ENCODE measurements at regions of chr2 and their contacts with region 1.

Region 1: GRCh38 chr2:164737612-164738081 is 104.0 kb downstream of the COBLL1 start:
- DNase-seq: peak; percentile 73 to 76
- H3K4me3 ChIP-seq: no peak overlapping the region
- H3K4me1 ChIP-seq: peaks cover 26% of the 10 kb centered on the region
- H3K27me3 ChIP-seq: no peaks in the 10 kb centered on the region

Region 2: DNA sequence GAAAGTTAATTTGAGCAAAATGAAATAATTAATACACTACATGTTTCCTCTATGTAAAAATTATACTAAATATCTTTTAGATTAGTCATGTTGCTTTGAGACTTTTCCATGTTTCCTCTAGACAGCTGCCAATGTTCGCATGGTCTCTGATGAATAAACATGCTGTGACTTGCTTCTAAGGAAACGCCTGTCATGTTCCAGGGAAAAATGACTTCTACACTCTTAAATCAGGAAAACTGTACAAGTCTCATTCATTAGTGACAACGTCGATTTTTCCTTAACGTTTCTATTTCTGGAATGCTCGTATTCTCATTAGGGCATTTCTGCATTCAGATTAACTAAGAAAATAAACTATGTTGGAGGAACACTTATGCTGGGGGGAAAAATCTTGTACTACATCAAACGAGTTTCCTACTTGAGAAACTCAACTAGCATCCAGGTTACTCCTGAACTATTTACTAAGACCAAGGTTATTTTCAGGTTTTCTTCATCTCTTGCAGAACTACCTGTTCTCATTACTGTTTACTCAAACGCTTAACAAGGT is 102.3 kb after region 1 on chr2:
- in situ Hi-C with region 1: loop called (anchors 10 kb)
- DNase-seq: no peak
- H3K4me3 ChIP-seq: peak overlapping the region; percentile 59
- H3K4me1 ChIP-seq: peaks cover 49% of the 10 kb centered on the region
- H3K27me3 ChIP-seq: no peaks in the 10 kb centered on the region

Region 3: GRCh38 chr2:164920430-164920829 is 182.8 kb after region 1 on chr2:
- in situ Hi-C with region 1: loop called (anchors 10 kb)
- DNase-seq: no peak
- H3K4me3 ChIP-seq: no peak overlapping the region
- H3K4me1 ChIP-seq: peaks cover 16% of the 10 kb centered on the region
- H3K27me3 ChIP-seq: no peaks in the 10 kb centered on the region

Measured in HAP-1 (cell line).